RWPE1 (cell line): ENCODE measurements at regions of chr1 and their contacts with region 1.

Region 1: GRCh38 chr1:152533327-152533938 is 19.2 kb downstream of the CRCT1 start:
- DNase-seq: peak; percentile 58
- H3K27ac ChIP-seq: no peak overlapping the region
- CTCF ChIP-seq: peak; percentile 85

Region 2: DNA sequence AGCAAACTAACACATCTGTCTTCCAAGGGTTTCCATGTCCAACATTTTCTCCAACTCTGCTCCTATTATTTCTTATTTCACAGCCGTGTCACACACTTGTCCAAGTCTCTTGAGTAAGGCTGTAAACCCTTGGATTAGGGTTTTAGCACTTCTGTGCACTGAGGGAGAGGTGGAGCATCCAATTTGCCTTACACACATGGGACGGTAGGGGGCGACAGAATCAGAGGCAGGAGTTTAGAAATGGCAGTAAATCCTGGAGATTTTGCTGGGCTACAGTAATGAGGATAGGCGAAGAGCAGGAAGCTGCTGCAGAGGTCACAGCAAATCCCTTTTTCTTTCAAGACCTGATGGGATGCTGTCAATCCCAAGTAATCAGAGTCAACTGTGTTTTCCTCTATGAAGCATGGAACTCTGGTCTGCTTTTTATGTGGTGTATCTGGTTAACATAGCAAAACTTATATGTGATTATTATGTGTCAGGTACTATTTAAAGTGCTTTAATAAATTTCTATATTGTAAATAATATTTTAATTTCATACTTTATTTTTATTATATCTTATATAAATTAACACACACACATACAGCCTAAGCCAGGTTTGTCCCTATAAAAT is 38.3 kb before region 1 on chr1:
- CTCF ChIA-PET with region 1: interaction called, 11 read pairs
- POLR2A ChIA-PET with region 1: no interaction called
- DNase-seq: no peak
- H3K27ac ChIP-seq: no peak overlapping the region
- CTCF ChIP-seq: peak; percentile 57

Region 3: DNA sequence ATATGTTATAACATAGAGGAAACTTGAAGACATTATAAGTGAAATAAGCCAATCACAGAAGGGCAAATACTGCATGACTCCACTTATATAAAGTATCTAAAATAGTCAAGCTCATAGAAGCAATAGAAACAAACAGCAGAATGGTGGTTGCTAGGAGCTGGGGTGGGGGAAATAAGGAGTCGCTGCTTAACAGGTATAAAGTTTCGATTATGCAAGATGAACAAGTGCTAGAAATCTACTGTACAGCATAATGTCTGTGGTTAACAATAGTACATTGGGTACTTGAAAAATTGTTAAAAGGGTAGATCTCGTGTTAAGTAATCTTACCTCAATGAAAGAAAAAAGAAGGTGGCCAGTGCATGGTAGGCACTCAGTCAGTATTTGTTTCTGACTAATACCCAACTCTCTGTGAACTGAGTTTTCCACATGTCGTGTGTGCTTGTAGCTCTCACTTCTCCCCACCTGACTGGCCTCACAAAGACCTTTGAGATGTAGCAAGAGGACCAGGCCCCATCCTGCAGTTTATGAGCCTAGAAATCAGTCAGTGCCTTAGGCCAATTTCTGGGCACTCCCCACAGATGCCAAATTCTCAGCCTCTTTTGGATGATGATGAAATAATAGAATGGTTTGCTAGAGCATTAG is 398.9 kb after region 1 on chr1:
- CTCF ChIA-PET with region 1: no interaction called
- POLR2A ChIA-PET with region 1: no interaction called
- DNase-seq: no peak
- H3K27ac ChIP-seq: no peak overlapping the region
- CTCF ChIP-seq: no peak